ENCODE measurements at regions of chr15 and their contacts with region 1.

Region 1: DNA sequence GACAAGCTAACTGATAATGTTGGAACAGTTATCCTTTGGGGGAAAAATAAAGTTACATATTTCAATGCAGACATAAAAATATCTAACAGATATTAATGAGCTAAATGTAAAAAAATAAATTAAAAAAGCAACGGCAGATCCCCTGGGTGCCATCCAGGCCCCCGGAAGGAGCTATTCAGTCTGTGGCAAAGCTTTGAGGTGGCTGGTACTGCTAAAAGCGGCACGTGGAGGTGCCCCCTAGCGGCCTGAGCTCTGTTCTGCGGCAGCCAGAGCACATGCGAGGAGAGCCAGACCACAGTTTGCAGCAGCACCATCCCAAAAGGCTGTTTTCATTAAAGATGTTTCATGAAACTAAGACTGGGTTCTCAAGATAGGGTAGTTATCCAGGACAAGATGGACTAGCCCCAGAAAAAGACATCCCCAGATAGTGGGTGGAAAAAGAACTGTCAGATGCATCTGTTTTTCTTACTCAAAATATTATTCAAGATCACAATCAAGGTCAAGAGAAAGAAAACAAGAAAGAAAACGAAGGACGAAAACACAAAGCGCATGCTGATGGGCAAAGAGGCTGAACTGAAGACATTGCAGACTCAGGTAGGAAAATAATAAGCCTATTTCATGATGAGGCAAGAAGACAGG is 18.7 kb downstream of the AP3S2 start:
- DNase-seq: peak; percentile 82

Region 2: GRCh38 chr15:89750560-89751542 is 124.2 kb before region 1 on chr15 and contains the start of gene MESP1:
- in situ Hi-C with region 1: loop called (anchors 25 kb)
- DNase-seq: peak; percentile 88
- total RNA-seq, gene MESP1: not detected in 2 replicates

Region 3: GRCh38 chr15:89912674-89913396 is 37.8 kb after region 1 on chr15 and contains the start of gene ARPIN:
- in situ Hi-C with region 1: no loop called
- DNase-seq: peak; percentile 60
- total RNA-seq, gene ARPIN: 5.3 and 7.0 TPM in 2 replicates

Measured in G401 (cell line).